ENCODE measurements at regions of chr9 and their contacts with region 1.

Region 1: GRCh38 chr9:128094166-128094967 is 26.3 kb downstream of the SLC25A25 start:
- DNase-seq: peak; percentile 99
- H3K4me3 Mint-ChIP-seq: peak overlapping the region; percentile 66
- H3K27ac Mint-ChIP-seq: peak overlapping the region; percentile 99
- H3K4me1 Mint-ChIP-seq: peaks cover 21% of the 10 kb centered on the region
- H3K27me3 Mint-ChIP-seq: no peaks in the 10 kb centered on the region
- CTCF ChIP-seq: no peak

Region 2: GRCh38 chr9:128007566-128008138 is 86.7 kb before region 1 on chr9:
- CTCF ChIA-PET with region 1: no interaction called
- POLR2A ChIA-PET with region 1: no interaction called
- intact Hi-C with region 1: no loop called
- DNase-seq: peak; percentile 45
- H3K4me3 Mint-ChIP-seq: no peak overlapping the region
- H3K27ac Mint-ChIP-seq: no peak overlapping the region
- H3K4me1 Mint-ChIP-seq: peaks cover 11% of the 10 kb centered on the region
- H3K27me3 Mint-ChIP-seq: no peaks in the 10 kb centered on the region
- CTCF ChIP-seq: no peak

Region 3: GRCh38 chr9:128081056-128081455 is 13.3 kb before region 1 on chr9:
- CTCF ChIA-PET with region 1: interaction called, 15 read pairs
- POLR2A ChIA-PET with region 1: interaction called, 36 read pairs
- intact Hi-C with region 1: no loop called
- DNase-seq: no peak
- H3K4me3 Mint-ChIP-seq: no peak overlapping the region
- H3K27ac Mint-ChIP-seq: no peak overlapping the region
- H3K4me1 Mint-ChIP-seq: peaks cover 26% of the 10 kb centered on the region
- H3K27me3 Mint-ChIP-seq: no peaks in the 10 kb centered on the region
- CTCF ChIP-seq: no peak

Region 4: DNA sequence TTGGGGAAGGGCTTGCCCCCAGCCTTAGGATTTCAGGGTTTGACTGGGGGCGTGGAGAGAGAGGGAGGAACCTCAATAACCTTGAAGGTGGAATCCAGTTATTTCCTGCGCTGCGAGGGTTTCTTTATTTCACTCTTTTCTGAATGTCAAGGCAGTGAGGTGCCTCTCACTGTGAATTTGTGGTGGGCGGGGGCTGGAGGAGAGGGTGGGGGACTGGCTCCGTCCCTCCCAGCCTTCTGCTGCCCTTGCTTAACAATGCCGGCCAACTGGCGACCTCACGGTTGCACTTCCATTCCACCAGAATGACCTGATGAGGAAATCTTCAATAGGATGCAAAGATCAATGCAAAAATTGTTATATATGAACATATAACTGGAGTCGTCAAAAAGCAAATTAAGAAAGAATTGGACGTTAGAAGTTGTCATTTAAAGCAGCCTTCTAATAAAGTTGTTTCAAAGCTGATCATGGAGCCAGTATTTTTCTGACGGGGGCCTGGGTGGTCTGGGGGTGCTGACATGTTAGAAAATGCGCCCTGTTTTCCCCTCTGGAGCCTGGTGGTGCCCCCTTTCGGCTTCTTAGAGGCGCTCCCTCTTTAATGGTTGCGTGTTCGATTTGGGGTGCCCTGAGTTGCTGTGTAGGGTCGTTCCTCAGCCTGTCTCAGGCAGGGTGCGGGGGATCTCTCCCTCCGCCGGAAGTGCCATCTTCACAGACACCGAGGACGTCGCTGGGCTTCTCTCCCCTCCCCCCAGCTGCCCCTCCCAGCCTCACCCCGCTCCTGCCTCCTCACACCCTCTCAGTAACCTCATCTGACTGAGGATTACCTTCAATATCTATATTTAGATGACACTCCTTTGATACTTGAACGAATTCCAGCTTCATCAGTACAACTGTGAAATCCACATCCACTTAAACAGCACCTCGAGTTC is 14.7 kb after region 1 on chr9:
- CTCF ChIA-PET with region 1: interaction called, 3 read pairs
- POLR2A ChIA-PET with region 1: interaction called, 19 read pairs
- intact Hi-C with region 1: no loop called
- DNase-seq: no peak
- H3K4me3 Mint-ChIP-seq: no peak overlapping the region
- H3K27ac Mint-ChIP-seq: no peak overlapping the region
- H3K4me1 Mint-ChIP-seq: no peaks in the 10 kb centered on the region
- H3K27me3 Mint-ChIP-seq: no peaks in the 10 kb centered on the region
- CTCF ChIP-seq: no peak

Measured in MCF 10A (cell line).